Thyroid gland (tissue), 4 donors: ENCODE measurements at regions of chr6 and their contacts with region 1.

Region 1: GRCh38 chr6:10954590-10955010 is 67.7 kb downstream of the SYCP2L start:
- DNase-seq: peak; percentile 64 to 81
- H3K4me3 ChIP-seq: no peak overlapping the region
- H3K27ac ChIP-seq: no peak overlapping the region
- H3K4me1 ChIP-seq: no peaks in the 10 kb centered on the region
- H3K27me3 ChIP-seq: no peaks in the 10 kb centered on the region
- CTCF ChIP-seq: peak in 5 of 6 experiments; percentile 36 to 85 (median 65)
- POLR2A ChIP-seq: no peak

Region 2: DNA sequence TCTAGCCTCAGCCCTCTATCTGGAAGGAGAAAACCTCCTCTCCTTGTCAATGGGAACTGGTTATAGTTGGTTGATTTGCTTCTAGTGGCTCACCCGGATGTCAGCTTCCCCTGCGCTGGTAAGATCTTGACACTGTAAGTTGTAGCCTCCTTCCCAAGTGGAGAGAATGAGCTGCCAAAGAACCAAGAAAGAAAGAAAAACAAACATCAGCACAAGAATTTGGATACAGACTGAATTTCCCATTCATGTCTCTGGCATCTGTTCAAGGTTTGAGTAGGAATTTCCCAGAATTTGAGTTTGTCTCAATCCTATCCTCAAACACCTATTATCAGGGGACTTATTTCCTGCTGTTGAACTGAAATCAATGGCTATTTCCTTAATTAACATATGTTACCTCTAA is 45.4 kb after region 1 on chr6:
- intact Hi-C with region 1: no loop called
- DNase-seq: peak; percentile 9 to 30
- H3K4me3 ChIP-seq: no peak overlapping the region
- H3K27ac ChIP-seq: no peak overlapping the region
- H3K4me1 ChIP-seq: peaks cover 0 to 5% of the 10 kb centered on the region in 2 donors
- H3K27me3 ChIP-seq: no peaks in the 10 kb centered on the region
- CTCF ChIP-seq: no peak
- POLR2A ChIP-seq: no peak

Region 3: DNA sequence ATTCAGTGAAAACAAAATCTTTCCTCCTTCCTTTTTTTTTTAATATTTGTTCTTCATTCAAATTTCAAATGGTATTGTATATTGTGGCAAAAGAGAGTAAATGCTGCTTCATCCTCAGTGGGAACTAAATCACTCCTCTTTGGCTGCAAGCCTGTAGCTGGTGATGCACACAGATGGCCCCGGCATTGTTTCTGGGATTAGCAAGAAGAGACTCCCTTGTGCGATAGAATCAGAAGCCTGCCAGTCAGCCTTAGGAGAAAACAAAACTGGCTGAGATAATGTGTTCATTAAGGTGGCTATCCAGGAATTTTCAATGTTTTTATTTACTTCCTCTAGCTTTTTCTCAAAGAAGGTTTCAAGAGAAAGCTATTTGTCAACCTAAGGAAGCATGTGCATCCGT is 110.2 kb after region 1 on chr6:
- intact Hi-C with region 1: loop called (anchors 5 kb)
- DNase-seq: no peak
- H3K4me3 ChIP-seq: no peak overlapping the region
- H3K27ac ChIP-seq: no peak overlapping the region
- H3K4me1 ChIP-seq: no peaks in the 10 kb centered on the region
- H3K27me3 ChIP-seq: no peaks in the 10 kb centered on the region
- CTCF ChIP-seq: no peak
- POLR2A ChIP-seq: no peak

Region 4: DNA sequence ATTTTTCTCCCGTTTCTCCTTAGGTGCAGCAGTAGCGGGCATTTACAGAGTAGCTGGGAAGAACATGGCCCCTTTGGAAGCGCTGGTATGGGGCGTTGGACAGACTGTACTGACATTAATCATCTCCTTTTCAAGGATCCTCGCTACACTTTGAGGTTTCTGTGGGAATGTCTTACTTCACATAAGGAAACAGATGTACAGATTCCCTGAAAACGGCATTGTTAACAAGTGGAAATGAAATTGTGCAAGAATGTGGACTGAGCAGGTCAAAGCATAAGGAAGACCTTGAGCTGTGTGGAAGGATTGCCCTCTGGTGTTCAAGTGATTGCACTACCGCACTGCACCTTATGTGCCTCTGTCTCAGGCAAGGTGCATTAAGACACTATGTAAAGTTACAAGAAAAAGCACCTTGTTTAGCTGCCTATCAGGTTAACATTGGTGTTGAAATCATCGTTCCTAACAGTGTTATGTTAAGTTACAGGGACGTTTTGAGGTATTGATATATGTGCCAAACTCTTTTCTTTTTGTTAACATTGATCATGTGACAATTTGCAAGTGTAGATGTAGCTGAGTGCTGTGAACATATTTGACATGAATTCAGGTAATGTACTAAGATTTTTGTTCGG is 620.9 kb after region 1 on chr6:
- intact Hi-C with region 1: loop called (anchors 10 kb)
- DNase-seq: peak; percentile 58 to 64
- H3K4me3 ChIP-seq: no peak overlapping the region
- H3K27ac ChIP-seq: no peak overlapping the region
- H3K4me1 ChIP-seq: no peaks in the 10 kb centered on the region
- H3K27me3 ChIP-seq: no peaks in the 10 kb centered on the region
- CTCF ChIP-seq: peak; percentile 48 to 94 (median 89)
- POLR2A ChIP-seq: no peak